ENCODE measurements at regions of chr5 and their contacts with region 1.

Region 1: GRCh38 chr5:174424219-174425053 is 299.9 kb upstream of the MSX2 start:
- DNase-seq: no peak
- H3K4me3 ChIP-seq: no peak overlapping the region
- H3K27ac ChIP-seq: no peak overlapping the region
- H3K4me1 ChIP-seq: peaks cover 7% of the 10 kb centered on the region
- H3K27me3 ChIP-seq: peaks cover under 1% of the 10 kb centered on the region
- CTCF ChIP-seq: peak; percentile 36

Region 2: GRCh38 chr5:174532455-174533453 is 108.3 kb after region 1 on chr5:
- CTCF ChIA-PET with region 1: no interaction called
- POLR2A ChIA-PET with region 1: no interaction called
- intact Hi-C with region 1: loop called (anchors 5 kb)
- DNase-seq: peak; percentile 94
- H3K4me3 ChIP-seq: peak overlapping the region; percentile 9
- H3K27ac ChIP-seq: peak overlapping the region; percentile 68
- H3K4me1 ChIP-seq: peaks cover 35% of the 10 kb centered on the region
- H3K27me3 ChIP-seq: no peaks in the 10 kb centered on the region
- CTCF ChIP-seq: no peak

Region 3: DNA sequence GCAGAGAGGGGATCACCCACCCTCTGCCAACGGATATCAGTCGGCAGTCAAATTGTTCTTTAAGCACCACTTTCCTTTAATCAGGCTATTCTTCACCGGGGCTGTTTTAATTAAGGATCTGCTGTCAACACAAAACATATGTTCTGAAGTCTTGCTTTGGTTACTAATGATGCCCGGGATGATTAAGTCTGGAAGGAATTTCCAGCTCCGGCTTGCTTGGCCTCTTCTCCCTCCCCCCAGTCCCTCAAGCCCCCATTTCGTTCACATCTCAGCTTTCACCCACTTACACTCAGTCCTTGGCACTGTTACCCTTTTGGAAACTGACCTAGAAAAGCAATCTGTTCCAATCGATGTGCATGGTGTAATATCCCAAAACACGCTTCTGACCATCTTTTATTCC is 374.7 kb after region 1 on chr5:
- CTCF ChIA-PET with region 1: interaction called, 18 read pairs
- POLR2A ChIA-PET with region 1: interaction called, 15 read pairs
- intact Hi-C with region 1: no loop called
- DNase-seq: peak; percentile 18
- H3K4me3 ChIP-seq: no peak overlapping the region
- H3K27ac ChIP-seq: no peak overlapping the region
- H3K4me1 ChIP-seq: no peaks in the 10 kb centered on the region
- H3K27me3 ChIP-seq: peaks cover 21% of the 10 kb centered on the region
- CTCF ChIP-seq: no peak